CD4-positive, alpha-beta memory T cell (primary cell): ENCODE measurements at regions of chr22 and their contacts with region 1.

Region 1: GRCh38 chr22:24156913-24157821 is 24.1 kb upstream of the SUSD2 start:
- DNase-seq: peak; percentile 87 to 94 (median 87)
- H3K4me3 ChIP-seq: peak overlapping the region; percentile 92 to 96
- H3K4me3 Mint-ChIP-seq: peak overlapping the region; percentile 92 to 99 (median 94)
- H3K27ac ChIP-seq: peak overlapping the region; percentile 67
- H3K27ac Mint-ChIP-seq: peak overlapping the region; percentile 90 to 98 (median 93)
- H3K4me1 ChIP-seq: peaks cover 64% of the 10 kb centered on the region
- H3K4me1 Mint-ChIP-seq: peaks cover 36 to 88% (median 63%) of the 10 kb centered on the region in 4 donors
- H3K27me3 ChIP-seq: no peaks in the 10 kb centered on the region
- H3K27me3 Mint-ChIP-seq: no peaks in the 10 kb centered on the region

Region 2: GRCh38 chr22:23913661-23914353 is 243.4 kb before region 1 on chr22:
- CTCF ChIA-PET with region 1: no interaction called
- POLR2A ChIA-PET with region 1: interaction called, 6 read pairs
- intact Hi-C with region 1: loop called (anchors 10 kb)
- DNase-seq: peak; percentile 96 to 99 (median 97)
- H3K4me3 ChIP-seq: peak overlapping the region; percentile 57 to 86
- H3K4me3 Mint-ChIP-seq: peak overlapping the region; percentile 91 to 99 (median 96)
- H3K27ac ChIP-seq: peak overlapping the region; percentile 79
- H3K27ac Mint-ChIP-seq: peak overlapping the region; percentile 88 to 98 (median 96)
- H3K4me1 ChIP-seq: peaks cover 7% of the 10 kb centered on the region
- H3K4me1 Mint-ChIP-seq: peaks cover 9 to 25% (median 15%) of the 10 kb centered on the region in 4 donors
- H3K27me3 ChIP-seq: no peaks in the 10 kb centered on the region
- H3K27me3 Mint-ChIP-seq: no peaks in the 10 kb centered on the region

Region 3: DNA sequence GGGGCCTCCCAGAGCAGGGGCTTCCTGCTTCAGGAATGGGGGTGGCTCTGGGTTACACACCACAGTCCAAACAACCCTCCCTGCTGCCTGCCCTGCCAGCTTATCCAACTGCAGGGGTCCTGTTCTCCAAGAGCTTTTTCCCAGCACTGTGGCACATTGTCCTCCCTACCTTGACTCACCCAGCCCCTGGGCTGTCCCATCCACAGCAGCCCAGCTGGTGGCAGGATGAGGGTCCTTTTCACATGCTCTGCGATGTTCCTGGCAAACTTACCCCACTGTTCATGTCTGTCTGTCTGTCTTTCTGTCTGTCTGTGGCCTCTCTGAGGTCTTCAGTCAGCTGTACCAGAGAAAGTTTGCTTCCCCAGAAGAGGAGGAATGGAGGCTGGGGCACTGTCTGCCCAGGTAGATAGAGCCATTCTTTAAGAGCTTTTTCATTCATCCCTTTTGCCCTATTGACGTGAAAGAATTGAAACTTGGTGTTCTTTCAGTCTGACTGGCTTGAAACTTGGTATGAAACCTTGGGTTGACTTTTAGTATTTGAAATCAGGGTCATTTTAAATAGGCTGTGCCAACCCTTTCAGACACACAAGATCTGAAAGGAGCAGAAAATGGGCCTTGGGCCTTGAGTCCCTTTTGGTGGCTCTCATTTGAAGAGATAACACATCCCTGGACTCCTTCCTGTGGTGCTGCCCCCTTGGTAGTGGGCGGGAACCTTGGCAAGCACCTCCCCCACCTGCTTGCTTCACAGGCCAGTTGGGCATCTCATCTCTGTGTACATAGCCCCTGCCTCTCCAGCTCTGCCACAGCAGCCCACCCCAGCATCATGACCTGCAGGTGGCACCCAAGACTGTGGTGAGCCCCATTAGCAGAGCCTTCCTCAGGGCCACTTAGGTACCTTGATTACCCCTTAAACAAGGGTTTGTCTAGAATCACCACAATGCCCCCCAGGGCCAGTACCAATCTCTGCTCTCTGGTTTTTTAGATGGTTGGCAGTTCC is 50.5 kb before region 1 on chr22:
- CTCF ChIA-PET with region 1: interaction called, 33 read pairs
- POLR2A ChIA-PET with region 1: no interaction called
- intact Hi-C with region 1: loop called (anchors 2 kb)
- DNase-seq: peak; percentile 31 to 50 (median 35)
- H3K4me3 ChIP-seq: no peak overlapping the region
- H3K4me3 Mint-ChIP-seq: no peak overlapping the region
- H3K27ac ChIP-seq: no peak overlapping the region
- H3K27ac Mint-ChIP-seq: peak overlapping the region in 3 of 7 donors; percentile 50 to 51 (median 50)
- H3K4me1 ChIP-seq: no peaks in the 10 kb centered on the region
- H3K4me1 Mint-ChIP-seq: peaks cover 5 to 21% (median 7%) of the 10 kb centered on the region in 4 donors
- H3K27me3 ChIP-seq: no peaks in the 10 kb centered on the region
- H3K27me3 Mint-ChIP-seq: no peaks in the 10 kb centered on the region

Region 4: GRCh38 chr22:24140357-24140756 is 16.8 kb before region 1 on chr22:
- CTCF ChIA-PET with region 1: interaction called, 181 read pairs
- POLR2A ChIA-PET with region 1: interaction called, 176 read pairs
- intact Hi-C with region 1: loop called (anchors 2 kb)
- DNase-seq: no peak
- H3K4me3 ChIP-seq: no peak overlapping the region
- H3K4me3 Mint-ChIP-seq: peak overlapping the region in 1 of 8 donors; percentile 52
- H3K27ac ChIP-seq: no peak overlapping the region
- H3K27ac Mint-ChIP-seq: peak overlapping the region in 6 of 7 donors; percentile 5 to 85 (median 59)
- H3K4me1 ChIP-seq: peaks cover 53% of the 10 kb centered on the region
- H3K4me1 Mint-ChIP-seq: peaks cover 25 to 60% (median 48%) of the 10 kb centered on the region in 4 donors
- H3K27me3 ChIP-seq: no peaks in the 10 kb centered on the region
- H3K27me3 Mint-ChIP-seq: no peaks in the 10 kb centered on the region

Region 5: GRCh38 chr22:24175160-24175808 is 18.1 kb after region 1 on chr22:
- CTCF ChIA-PET with region 1: interaction called, 111 read pairs
- POLR2A ChIA-PET with region 1: interaction called, 90 read pairs
- intact Hi-C with region 1: loop called (anchors 2 kb)
- DNase-seq: peak; percentile 48 to 55 (median 49)
- H3K4me3 ChIP-seq: no peak overlapping the region
- H3K4me3 Mint-ChIP-seq: no peak overlapping the region
- H3K27ac ChIP-seq: no peak overlapping the region
- H3K27ac Mint-ChIP-seq: peak overlapping the region in 3 of 7 donors; percentile 13 to 83 (median 79)
- H3K4me1 ChIP-seq: no peaks in the 10 kb centered on the region
- H3K4me1 Mint-ChIP-seq: no peaks in the 10 kb centered on the region
- H3K27me3 ChIP-seq: no peaks in the 10 kb centered on the region
- H3K27me3 Mint-ChIP-seq: no peaks in the 10 kb centered on the region

Region 6: DNA sequence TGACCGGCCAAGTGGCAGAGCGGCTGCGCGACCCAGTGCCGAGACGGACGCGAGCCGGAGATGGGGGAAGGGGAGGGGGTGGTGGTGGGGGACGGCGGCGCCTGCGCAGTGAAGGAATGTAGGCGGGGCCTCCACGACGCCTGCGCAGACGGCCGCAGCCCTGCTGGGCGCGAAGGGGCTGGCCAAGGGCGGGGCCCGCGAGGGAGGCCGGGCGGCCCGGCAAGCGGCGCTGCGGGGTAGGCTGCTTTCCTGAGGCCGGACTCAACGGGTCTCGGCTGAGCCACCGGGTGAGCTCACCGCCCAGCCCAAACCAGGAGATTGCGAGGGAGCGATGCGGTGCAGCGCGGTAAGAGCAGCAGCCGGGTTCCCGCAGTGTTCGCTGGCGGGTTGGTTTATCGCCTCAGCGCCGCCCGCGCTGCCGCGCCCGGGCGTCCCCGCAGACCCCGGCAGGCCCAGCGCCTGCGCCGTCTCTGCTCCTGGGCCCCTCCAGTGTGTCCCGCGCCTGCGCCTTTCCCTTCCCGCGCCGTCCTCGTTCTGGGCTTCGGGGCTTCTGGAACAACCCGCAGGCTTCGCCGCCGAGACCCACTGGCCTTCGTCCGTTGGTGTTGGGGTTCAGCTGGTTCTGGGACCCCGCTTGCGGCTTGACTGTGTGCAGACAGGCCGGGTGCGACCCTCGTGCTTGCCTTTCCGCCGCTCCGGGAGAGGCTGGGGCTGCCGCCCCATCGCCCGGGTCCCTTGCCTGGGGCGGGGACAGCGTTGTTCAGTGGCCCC is 113.7 kb after region 1 on chr22 and contains the start of gene SPECC1L:
- CTCF ChIA-PET with region 1: no interaction called
- POLR2A ChIA-PET with region 1: interaction called, 11 read pairs
- intact Hi-C with region 1: no loop called
- DNase-seq: peak; percentile 89 to 92 (median 90)
- H3K4me3 ChIP-seq: peak within 1 kb of the TSS; percentile 52 to 87
- H3K4me3 Mint-ChIP-seq: peak within 1 kb of the TSS; percentile 87 to 98 (median 90)
- H3K27ac ChIP-seq: peak within 1 kb of the TSS; percentile 86
- H3K27ac Mint-ChIP-seq: peak within 1 kb of the TSS; percentile 82 to 92 (median 90)
- H3K4me1 ChIP-seq: peaks cover 25% of the 10 kb centered on the region
- H3K4me1 Mint-ChIP-seq: peaks cover 13 to 39% (median 22%) of the 10 kb centered on the region in 4 donors
- H3K27me3 ChIP-seq: no peaks in the 10 kb centered on the region
- H3K27me3 Mint-ChIP-seq: no peaks in the 10 kb centered on the region
- total RNA-seq, gene SPECC1L: 51.1 to 62.1 TPM